ENCODE measurements at regions of chr6 and their contacts with region 1.

Region 1: DNA sequence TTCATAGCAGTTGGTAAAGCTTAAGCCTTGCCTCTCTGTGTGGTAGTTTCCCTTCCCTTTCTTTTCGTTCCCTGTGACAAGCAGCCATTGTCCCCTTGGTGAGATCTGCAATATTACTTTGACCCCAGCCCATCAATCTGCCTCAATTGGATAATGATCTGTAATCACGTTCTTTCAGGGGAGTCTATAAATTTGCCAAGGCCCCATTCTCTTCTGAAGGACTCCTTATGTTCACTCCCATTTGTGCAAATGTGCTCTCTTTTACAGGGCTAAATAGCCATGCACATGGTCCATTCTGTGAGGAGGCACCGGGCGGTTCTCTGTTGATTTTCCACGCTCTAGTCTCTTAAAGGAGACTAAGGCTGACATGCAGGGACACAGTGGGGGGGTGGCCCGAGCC is 660.4 kb upstream of the SLC35B3 start:
- DNase-seq: no peak
- ATAC-seq: no peak
- H3K4me3 ChIP-seq: no peak overlapping the region
- H3K27ac ChIP-seq: no peak overlapping the region
- H3K4me1 ChIP-seq: no peaks in the 10 kb centered on the region
- H3K27me3 ChIP-seq: no peaks in the 10 kb centered on the region
- CTCF ChIP-seq: no peak
- POLR2A ChIP-seq: no peak

Region 2: DNA sequence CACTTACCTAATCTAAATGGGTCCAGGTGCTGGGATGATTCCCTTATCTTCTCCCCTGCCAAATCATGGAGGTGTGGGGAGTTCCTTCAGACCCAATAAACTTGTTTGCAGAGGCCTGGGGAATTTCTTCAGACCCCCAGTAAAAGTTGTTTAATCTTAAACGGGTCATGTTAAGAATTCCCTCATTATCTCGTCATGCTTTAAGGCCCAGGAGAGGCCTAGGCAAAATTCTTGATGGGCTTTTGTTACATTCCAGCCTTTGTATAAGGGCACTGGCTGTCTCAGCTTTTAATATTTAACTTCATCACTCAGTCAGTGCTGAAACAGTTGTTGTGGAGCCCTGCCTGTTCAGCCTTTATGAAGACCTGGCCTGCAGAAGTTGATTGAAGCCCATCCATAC is 649.3 kb before region 1 on chr6:
- intact Hi-C with region 1: loop called in 1 of 10 experiments (anchors 5 kb)
- DNase-seq: no peak
- ATAC-seq: no peak
- H3K4me3 ChIP-seq: no peak overlapping the region
- H3K27ac ChIP-seq: no peak overlapping the region
- H3K4me1 ChIP-seq: no peaks in the 10 kb centered on the region
- H3K27me3 ChIP-seq: no peaks in the 10 kb centered on the region
- CTCF ChIP-seq: no peak
- POLR2A ChIP-seq: no peak

Region 3: DNA sequence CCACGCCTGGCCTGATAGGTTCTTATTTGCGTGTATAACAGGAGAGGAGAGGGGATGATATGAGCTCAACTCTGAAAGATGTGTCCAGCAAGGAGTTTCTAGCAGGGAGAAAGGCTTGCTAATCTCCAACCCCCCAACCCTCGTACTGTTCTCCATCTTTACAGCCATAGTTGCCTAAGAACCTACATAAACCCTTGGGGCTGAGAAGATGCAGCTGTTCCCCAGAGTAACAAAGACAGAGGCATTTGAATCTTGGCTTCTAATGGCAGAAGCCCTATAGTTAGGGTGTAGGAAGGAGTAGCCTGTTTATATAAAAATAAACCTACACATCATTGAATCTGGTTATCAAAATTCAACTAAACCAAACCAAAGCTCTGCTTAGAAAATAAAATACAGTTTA is 29.0 kb before region 1 on chr6:
- intact Hi-C with region 1: no loop called
- DNase-seq: no peak
- ATAC-seq: no peak
- H3K4me3 ChIP-seq: no peak overlapping the region
- H3K27ac ChIP-seq: no peak overlapping the region
- H3K4me1 ChIP-seq: no peaks in the 10 kb centered on the region
- H3K27me3 ChIP-seq: no peaks in the 10 kb centered on the region
- CTCF ChIP-seq: no peak
- POLR2A ChIP-seq: no peak

Measured in heart left ventricle (tissue), 16 donors.